AG04450 (cell line): ENCODE measurements at regions of chr13 and their contacts with region 1.

Region 1: DNA sequence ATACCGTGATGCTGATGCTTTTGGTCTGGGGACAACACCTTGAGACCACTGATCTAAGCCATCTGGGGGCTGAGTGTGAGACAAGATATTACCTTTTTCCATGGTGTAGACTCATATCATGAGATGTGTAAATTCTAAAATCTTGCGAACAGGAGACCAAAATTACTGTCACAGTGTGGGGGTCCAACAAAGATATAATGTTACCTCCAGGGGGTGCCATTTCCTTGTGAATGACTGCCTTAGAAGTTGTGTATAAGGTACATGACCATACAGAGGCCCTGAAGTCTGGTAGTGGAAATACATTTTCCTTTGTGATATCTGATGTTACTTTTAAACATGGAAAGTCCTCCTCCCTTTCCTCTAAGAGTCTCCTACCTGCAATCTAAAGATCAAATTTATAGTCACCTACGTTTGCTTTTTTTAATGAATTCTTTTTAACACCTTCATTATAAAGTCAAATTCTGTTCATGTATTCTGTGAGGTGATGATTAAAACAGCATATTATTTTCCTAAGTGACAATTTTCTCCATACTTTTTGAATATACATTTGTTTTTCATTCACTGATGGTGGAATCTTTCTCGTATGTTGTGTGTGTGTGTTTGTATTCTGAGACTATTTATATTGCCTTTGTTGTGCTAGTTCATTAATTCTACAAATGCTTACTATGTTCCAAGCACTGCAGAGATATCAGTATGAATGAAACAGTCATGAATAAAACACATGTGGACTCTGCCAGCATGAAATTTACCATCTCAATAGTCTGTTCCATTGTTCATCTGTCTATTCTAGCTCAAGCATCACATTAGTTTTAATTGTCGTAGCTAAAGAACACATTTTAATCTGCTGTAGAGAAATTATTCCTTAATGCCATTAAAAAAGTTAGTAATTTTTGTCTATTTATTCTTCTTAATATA is 113.7 kb downstream of the RFC3 start:
- DNase-seq: no peak
- H3K4me3 ChIP-seq: no peak overlapping the region
- H3K27ac ChIP-seq: no peak overlapping the region
- H3K27me3 ChIP-seq: no peaks in the 10 kb centered on the region
- CTCF ChIP-seq: peak; percentile 65

Region 2: GRCh38 chr13:33945477-33945876 is 13.8 kb after region 1 on chr13:
- CTCF ChIA-PET with region 1: no interaction called
- POLR2A ChIA-PET with region 1: no interaction called
- DNase-seq: no peak
- H3K4me3 ChIP-seq: no peak overlapping the region
- H3K27ac ChIP-seq: no peak overlapping the region
- H3K27me3 ChIP-seq: no peaks in the 10 kb centered on the region
- CTCF ChIP-seq: no peak

Region 3: GRCh38 chr13:34076943-34077703 is 145.5 kb after region 1 on chr13:
- CTCF ChIA-PET with region 1: interaction called, 62 read pairs
- POLR2A ChIA-PET with region 1: no interaction called
- DNase-seq: no peak
- H3K4me3 ChIP-seq: no peak overlapping the region
- H3K27ac ChIP-seq: no peak overlapping the region
- H3K27me3 ChIP-seq: no peaks in the 10 kb centered on the region
- CTCF ChIP-seq: peak; percentile 62

Region 4: DNA sequence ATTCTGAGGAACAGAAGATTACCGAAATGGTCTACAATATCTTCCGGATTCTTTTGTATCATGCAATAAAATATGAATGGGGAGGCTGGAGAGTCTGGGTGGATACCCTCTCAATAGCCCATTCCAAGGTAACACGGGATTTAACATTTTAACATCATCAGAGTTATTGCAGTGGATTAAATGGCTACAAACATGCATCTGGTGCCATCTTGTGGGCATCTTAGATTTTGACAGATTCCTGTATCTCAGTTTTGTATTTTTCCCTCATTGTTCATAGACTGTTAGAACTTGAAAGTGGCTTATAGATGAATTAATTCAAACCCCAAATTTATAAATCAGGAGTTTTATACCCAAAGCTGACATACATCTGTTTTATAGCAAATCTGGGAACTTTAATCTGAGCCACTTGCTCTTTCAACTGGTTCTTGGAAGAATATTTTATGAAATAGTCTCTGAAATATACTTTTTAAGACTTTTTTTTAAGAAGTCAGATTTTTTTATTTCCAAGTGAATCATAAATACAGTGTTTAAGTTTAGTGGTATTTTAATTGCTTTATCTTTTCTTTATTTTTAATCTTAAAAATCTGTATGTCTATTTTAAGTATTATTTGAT is 1225.6 kb after region 1 on chr13:
- CTCF ChIA-PET with region 1: interaction called, 18 read pairs
- POLR2A ChIA-PET with region 1: no interaction called
- DNase-seq: peak; percentile 16
- H3K4me3 ChIP-seq: no peak overlapping the region
- H3K27ac ChIP-seq: no peak overlapping the region
- H3K27me3 ChIP-seq: no peaks in the 10 kb centered on the region
- CTCF ChIP-seq: peak; percentile 66